Sciatic nerve (tissue), 2 donors: ENCODE measurements at regions of chr18 and their contacts with region 1.

Region 1: GRCh38 chr18:36095936-36096519 is 28.7 kb upstream of the RPRD1A start:
- DNase-seq: no peak
- ATAC-seq: no peak

Region 2: GRCh38 chr18:36284671-36285295 is 188.8 kb after region 1 on chr18:
- intact Hi-C with region 1: loop called (anchors 10 kb)
- DNase-seq: no peak
- ATAC-seq: peak; percentile 53